H1 (cell line): ENCODE measurements at regions of chr4 and their contacts with region 1.

Region 1: GRCh38 chr4:77385124-77385969 is 220.3 kb upstream of the CXCL13 start:
- DNase-seq: peak; percentile 33 to 73
- H3K4me3 ChIP-seq: no peak overlapping the region
- H3K27ac ChIP-seq: no peak overlapping the region
- H3K4me1 ChIP-seq: peaks cover 0 to 4% (median 3%) of the 10 kb centered on the region in 4 experiments; a peak in 2 of 7 replicates
- H3K27me3 ChIP-seq: peaks cover 0 to 1% (median 0%) of the 10 kb centered on the region in 4 experiments; a peak in 1 of 7 replicates
- CTCF ChIP-seq: peak; percentile 61 to 93 (median 92)
- EP300 ChIP-seq: no peak
- POLR2A ChIP-seq: no peak
- RAD21 ChIP-seq: peak; percentile 89 to 91

Region 2: GRCh38 chr4:77336411-77337142 is 48.8 kb before region 1 on chr4:
- CTCF ChIA-PET with region 1: no interaction called
- POLR2A ChIA-PET with region 1: no interaction called
- DNase-seq: no peak
- H3K4me3 ChIP-seq: no peak overlapping the region
- H3K27ac ChIP-seq: no peak overlapping the region
- H3K4me1 ChIP-seq: no peaks in the 10 kb centered on the region
- H3K27me3 ChIP-seq: no peaks in the 10 kb centered on the region
- CTCF ChIP-seq: no peak
- EP300 ChIP-seq: no peak
- POLR2A ChIP-seq: no peak
- RAD21 ChIP-seq: no peak

Region 3: GRCh38 chr4:77367638-77368037 is 17.7 kb before region 1 on chr4:
- CTCF ChIA-PET with region 1: interaction called, 54 read pairs
- POLR2A ChIA-PET with region 1: no interaction called
- DNase-seq: no peak
- H3K4me3 ChIP-seq: no peak overlapping the region
- H3K27ac ChIP-seq: no peak overlapping the region
- H3K4me1 ChIP-seq: no peaks in the 10 kb centered on the region
- H3K27me3 ChIP-seq: no peaks in the 10 kb centered on the region
- CTCF ChIP-seq: no peak
- EP300 ChIP-seq: no peak
- POLR2A ChIP-seq: no peak
- RAD21 ChIP-seq: no peak

Region 4: GRCh38 chr4:77443941-77444340 is 58.6 kb after region 1 on chr4:
- CTCF ChIA-PET with region 1: interaction called, 10 read pairs
- POLR2A ChIA-PET with region 1: no interaction called
- DNase-seq: no peak
- H3K4me3 ChIP-seq: no peak overlapping the region
- H3K27ac ChIP-seq: no peak overlapping the region
- H3K4me1 ChIP-seq: no peaks in the 10 kb centered on the region
- H3K27me3 ChIP-seq: no peaks in the 10 kb centered on the region
- CTCF ChIP-seq: no peak
- EP300 ChIP-seq: no peak
- POLR2A ChIP-seq: no peak
- RAD21 ChIP-seq: no peak

Region 5: GRCh38 chr4:77681792-77682191 is 296.4 kb after region 1 on chr4:
- CTCF ChIA-PET with region 1: no interaction called
- POLR2A ChIA-PET with region 1: no interaction called
- DNase-seq: no peak
- H3K4me3 ChIP-seq: no peak overlapping the region
- H3K27ac ChIP-seq: no peak overlapping the region
- H3K4me1 ChIP-seq: no peaks in the 10 kb centered on the region
- H3K27me3 ChIP-seq: no peaks in the 10 kb centered on the region
- CTCF ChIP-seq: no peak
- EP300 ChIP-seq: no peak
- POLR2A ChIP-seq: no peak
- RAD21 ChIP-seq: no peak